CD8-positive, alpha-beta T cell (primary cell): ENCODE measurements at regions of chr2 and their contacts with region 1.

Region 1: GRCh38 chr2:118046634-118047210 is 32.9 kb upstream of the CCDC93 start:
- DNase-seq: peak in 2 of 9 experiments; percentile 36 to 53
- ATAC-seq: no peak
- H3K4me3 ChIP-seq: no peak overlapping the region
- H3K4me3 Mint-ChIP-seq: no peak overlapping the region
- H3K27ac ChIP-seq: no peak overlapping the region
- H3K27ac Mint-ChIP-seq: no peak overlapping the region
- H3K4me1 ChIP-seq: no peaks in the 10 kb centered on the region
- H3K4me1 Mint-ChIP-seq: no peaks in the 10 kb centered on the region
- H3K27me3 ChIP-seq: peaks cover 0 to 3% of the 10 kb centered on the region in 2 experiments
- H3K27me3 Mint-ChIP-seq: peaks cover 44% of the 10 kb centered on the region
- CTCF ChIP-seq: peak; percentile 73

Region 2: DNA sequence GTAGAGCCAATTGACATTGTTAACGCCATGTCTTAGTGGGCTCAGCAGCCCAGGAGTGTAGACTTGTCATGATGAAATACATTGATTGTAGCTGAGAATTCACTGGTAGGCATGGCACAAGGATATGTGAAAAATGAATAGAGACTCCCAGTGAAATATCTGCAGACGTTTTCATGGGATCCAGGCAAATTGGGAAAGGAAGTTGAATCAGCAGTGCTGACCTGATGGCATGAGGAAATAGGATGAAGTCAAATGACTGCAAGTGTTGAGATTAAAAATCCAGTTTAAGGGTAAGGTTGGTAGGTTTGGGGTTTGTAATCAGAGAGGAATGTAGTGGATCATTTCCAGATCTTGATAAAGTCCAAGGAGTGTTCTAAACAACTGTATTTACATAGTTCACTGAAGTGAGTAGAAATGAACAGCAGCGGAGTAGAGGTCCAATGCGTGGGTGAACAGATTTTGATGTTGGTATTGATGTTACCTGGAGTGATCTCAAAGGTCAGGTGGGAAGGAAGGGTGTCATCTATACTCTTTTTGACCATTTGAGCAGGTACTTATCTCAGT is 66.1 kb after region 1 on chr2:
- CTCF ChIA-PET with region 1: no interaction called
- POLR2A ChIA-PET with region 1: no interaction called
- intact Hi-C with region 1: no loop called
- DNase-seq: no peak
- ATAC-seq: no peak
- H3K4me3 ChIP-seq: no peak overlapping the region
- H3K4me3 Mint-ChIP-seq: no peak overlapping the region
- H3K27ac ChIP-seq: no peak overlapping the region
- H3K27ac Mint-ChIP-seq: no peak overlapping the region
- H3K4me1 ChIP-seq: no peaks in the 10 kb centered on the region
- H3K4me1 Mint-ChIP-seq: no peaks in the 10 kb centered on the region
- H3K27me3 ChIP-seq: no peaks in the 10 kb centered on the region
- H3K27me3 Mint-ChIP-seq: no peaks in the 10 kb centered on the region
- CTCF ChIP-seq: no peak

Region 3: DNA sequence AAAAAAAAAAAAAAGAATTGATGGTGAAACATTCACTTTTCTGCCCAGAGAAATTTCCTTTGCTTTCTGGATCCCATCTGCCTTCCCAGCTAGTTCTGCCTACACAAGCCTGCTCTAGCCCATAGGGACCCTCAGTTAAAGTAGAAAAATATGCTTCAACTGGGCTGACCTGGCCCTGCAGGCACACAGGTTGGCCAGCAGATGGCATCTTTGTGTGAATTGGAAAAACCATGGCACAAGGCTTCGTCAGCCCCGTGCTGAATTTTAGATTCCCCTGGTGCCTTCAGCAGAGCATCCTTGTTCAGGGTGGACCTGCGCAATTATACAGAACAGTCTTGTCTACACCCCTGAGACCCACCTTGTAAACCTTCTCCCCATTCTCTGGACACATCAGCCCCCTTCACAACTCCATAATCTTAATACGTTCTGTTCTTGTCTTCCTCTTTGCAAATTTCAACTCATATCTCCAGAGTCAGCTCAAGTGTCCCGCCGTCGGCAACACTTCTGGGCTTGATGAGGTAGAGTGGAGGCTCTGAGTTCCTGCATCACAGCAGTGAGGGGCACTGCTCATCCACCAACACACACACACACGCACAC is 156.1 kb after region 1 on chr2:
- CTCF ChIA-PET with region 1: interaction called, 4 read pairs
- POLR2A ChIA-PET with region 1: no interaction called
- intact Hi-C with region 1: loop called in 1 of 2 experiments (anchors 1 kb)
- DNase-seq: peak in 8 of 9 experiments; percentile 24 to 71 (median 54)
- ATAC-seq: peak; percentile 92
- H3K4me3 ChIP-seq: no peak overlapping the region
- H3K4me3 Mint-ChIP-seq: peak overlapping the region; percentile 0
- H3K27ac ChIP-seq: no peak overlapping the region
- H3K27ac Mint-ChIP-seq: no peak overlapping the region
- H3K4me1 ChIP-seq: no peaks in the 10 kb centered on the region
- H3K4me1 Mint-ChIP-seq: peaks cover 5% of the 10 kb centered on the region
- H3K27me3 ChIP-seq: no peaks in the 10 kb centered on the region
- H3K27me3 Mint-ChIP-seq: peaks cover 26% of the 10 kb centered on the region
- CTCF ChIP-seq: peak; percentile 77

Region 4: GRCh38 chr2:118855451-118856279 is 808.9 kb after region 1 on chr2:
- CTCF ChIA-PET with region 1: interaction called, 20 read pairs
- POLR2A ChIA-PET with region 1: no interaction called
- intact Hi-C with region 1: loop called (anchors 1 kb)
- DNase-seq: peak; percentile 69 to 87 (median 79)
- ATAC-seq: peak; percentile 88
- H3K4me3 ChIP-seq: peak overlapping the region; percentile 23 to 53
- H3K4me3 Mint-ChIP-seq: peak overlapping the region; percentile 73
- H3K27ac ChIP-seq: no peak overlapping the region
- H3K27ac Mint-ChIP-seq: no peak overlapping the region
- H3K4me1 ChIP-seq: peaks cover 27% of the 10 kb centered on the region
- H3K4me1 Mint-ChIP-seq: peaks cover 18% of the 10 kb centered on the region
- H3K27me3 ChIP-seq: peaks cover 47 to 57% of the 10 kb centered on the region in 2 experiments
- H3K27me3 Mint-ChIP-seq: peaks cover 65% of the 10 kb centered on the region
- CTCF ChIP-seq: peak; percentile 85

Region 5: DNA sequence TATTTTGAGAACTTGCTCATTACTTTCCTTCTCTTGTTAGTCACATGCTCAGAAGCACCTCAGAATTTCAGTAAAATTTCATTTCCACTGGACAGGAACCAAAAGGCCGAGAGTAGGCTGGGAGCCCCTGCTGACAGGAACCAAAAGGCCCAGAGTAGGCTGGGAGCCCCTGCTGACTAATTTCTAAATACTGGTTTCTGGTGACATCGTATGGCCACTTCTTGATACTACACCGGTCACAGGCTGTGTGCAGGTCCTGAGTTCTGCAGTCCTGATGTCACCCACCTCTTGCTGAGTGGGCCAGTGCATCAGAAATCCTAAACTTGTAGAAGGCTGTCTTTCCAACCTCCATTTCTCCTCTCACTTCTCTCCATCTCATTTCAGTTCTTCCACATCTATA is 818.4 kb after region 1 on chr2:
- CTCF ChIA-PET with region 1: interaction called, 18 read pairs
- POLR2A ChIA-PET with region 1: no interaction called
- intact Hi-C with region 1: loop called (anchors 2 kb)
- DNase-seq: peak in 2 of 9 experiments; percentile 45 to 55
- ATAC-seq: peak; percentile 55
- H3K4me3 ChIP-seq: no peak overlapping the region
- H3K4me3 Mint-ChIP-seq: no peak overlapping the region
- H3K27ac ChIP-seq: no peak overlapping the region
- H3K27ac Mint-ChIP-seq: no peak overlapping the region
- H3K4me1 ChIP-seq: no peaks in the 10 kb centered on the region
- H3K4me1 Mint-ChIP-seq: no peaks in the 10 kb centered on the region
- H3K27me3 ChIP-seq: peaks cover 0 to under 1% of the 10 kb centered on the region in 2 experiments
- H3K27me3 Mint-ChIP-seq: peaks cover 34% of the 10 kb centered on the region
- CTCF ChIP-seq: peak; percentile 31

Region 6: DNA sequence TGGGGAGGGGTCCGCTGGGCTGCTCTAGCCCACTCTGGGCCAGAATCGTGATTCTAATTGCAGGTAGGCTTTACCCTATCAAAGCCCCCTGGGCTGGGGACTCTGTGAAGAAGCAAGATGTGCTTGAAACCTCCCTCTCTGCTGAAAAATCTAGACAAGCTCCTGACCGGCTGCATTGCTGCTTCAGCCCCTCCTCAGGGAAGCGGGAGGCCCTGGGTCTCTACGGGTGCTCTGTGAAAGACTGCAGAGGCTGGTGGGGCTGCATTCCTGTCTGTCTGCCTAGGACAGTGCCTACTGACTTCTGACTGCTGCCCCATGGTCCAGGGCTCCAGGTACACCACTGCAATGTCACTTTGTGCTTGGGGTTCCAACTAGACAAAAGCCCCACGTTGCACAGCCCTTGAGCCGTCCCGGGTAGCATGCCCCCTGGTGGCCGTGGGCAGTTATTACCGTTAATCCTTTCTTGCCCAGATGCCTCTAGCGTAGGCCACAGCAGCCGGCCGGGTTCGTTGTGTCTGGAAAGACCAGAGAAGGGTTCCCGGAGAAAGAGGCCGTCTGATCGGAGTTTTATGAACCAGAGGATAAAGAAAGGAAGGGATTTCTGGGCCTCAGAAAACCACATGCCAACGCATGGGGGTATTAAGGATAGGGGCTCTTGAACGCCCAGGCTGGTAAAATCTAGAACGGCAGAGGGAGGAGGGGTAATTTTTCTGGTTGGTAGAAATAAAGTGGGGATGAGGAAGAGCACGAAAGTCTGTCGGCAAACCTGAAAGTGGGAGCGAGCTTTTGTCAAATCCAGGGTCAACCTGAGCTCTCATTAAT is 1127.7 kb after region 1 on chr2:
- CTCF ChIA-PET with region 1: no interaction called
- POLR2A ChIA-PET with region 1: no interaction called
- intact Hi-C with region 1: loop called in 1 of 2 experiments (anchors 5 kb)
- DNase-seq: peak; percentile 25 to 76 (median 50)
- ATAC-seq: no peak
- H3K4me3 ChIP-seq: no peak overlapping the region
- H3K4me3 Mint-ChIP-seq: no peak overlapping the region
- H3K27ac ChIP-seq: no peak overlapping the region
- H3K27ac Mint-ChIP-seq: no peak overlapping the region
- H3K4me1 ChIP-seq: no peaks in the 10 kb centered on the region
- H3K4me1 Mint-ChIP-seq: no peaks in the 10 kb centered on the region
- H3K27me3 ChIP-seq: no peaks in the 10 kb centered on the region
- H3K27me3 Mint-ChIP-seq: no peaks in the 10 kb centered on the region
- CTCF ChIP-seq: peak; percentile 73

Region 7: DNA sequence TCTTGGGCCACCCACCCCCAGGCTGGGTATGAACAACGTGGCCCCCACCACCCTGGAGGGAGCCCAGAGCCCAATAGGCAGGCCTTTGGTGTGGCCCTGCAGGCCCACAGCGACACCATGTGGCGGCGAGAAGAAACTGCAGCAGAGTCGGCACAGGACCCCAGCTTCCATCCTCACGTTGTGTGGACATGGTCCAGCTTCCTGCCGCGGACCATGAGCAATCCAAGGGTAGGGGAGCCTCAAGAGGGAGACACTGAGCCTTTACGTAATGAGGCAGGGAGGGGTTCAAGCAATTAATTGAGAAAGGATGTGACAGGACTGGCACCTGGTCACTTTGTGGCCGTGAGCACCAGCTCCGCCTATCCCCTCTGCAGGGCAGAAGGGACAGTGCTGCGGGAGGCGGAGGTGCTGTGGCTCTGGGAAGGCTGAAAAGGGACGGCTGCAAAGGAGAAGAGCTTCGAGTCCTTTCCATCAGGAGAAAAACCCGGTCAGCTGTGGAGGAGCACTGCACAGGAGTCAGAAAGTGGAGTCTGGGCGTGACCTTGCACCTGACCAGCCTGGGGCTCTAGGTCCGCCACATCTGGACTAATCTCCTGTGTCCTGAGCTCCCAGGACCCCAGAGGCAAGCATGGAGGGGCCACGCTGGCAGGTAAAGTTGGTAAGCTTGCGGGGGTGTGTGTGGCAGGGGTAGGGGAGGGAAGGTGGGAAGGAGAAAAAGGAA is 1429.7 kb after region 1 on chr2:
- CTCF ChIA-PET with region 1: no interaction called
- POLR2A ChIA-PET with region 1: no interaction called
- intact Hi-C with region 1: loop called in 1 of 2 experiments (anchors 5 kb)
- DNase-seq: peak in 7 of 9 experiments; percentile 8 to 60 (median 22)
- ATAC-seq: no peak
- H3K4me3 ChIP-seq: no peak overlapping the region
- H3K4me3 Mint-ChIP-seq: no peak overlapping the region
- H3K27ac ChIP-seq: no peak overlapping the region
- H3K27ac Mint-ChIP-seq: no peak overlapping the region
- H3K4me1 ChIP-seq: no peaks in the 10 kb centered on the region
- H3K4me1 Mint-ChIP-seq: no peaks in the 10 kb centered on the region
- H3K27me3 ChIP-seq: peaks cover 0 to 5% of the 10 kb centered on the region in 2 experiments
- H3K27me3 Mint-ChIP-seq: peaks cover 13% of the 10 kb centered on the region
- CTCF ChIP-seq: peak; percentile 74

Region 8: DNA sequence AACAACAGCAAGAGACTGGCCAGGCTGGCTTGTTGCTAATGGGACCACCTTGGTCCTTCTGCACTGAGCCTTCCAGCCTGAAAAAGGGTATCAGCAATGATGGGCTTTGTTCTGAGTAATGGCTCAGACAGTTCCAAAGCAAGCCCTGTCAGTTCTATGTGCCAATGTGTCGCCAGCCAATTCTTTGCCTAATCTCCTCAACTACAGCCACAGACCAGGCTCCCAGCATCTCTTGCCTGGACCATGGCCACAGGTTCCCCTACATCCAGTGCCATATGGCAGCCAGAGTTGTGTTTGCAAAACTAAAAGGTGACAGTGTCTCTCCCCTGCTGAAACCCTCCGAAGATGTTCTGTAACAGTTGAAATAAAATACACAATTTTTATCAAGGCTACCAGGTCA is 1570.7 kb after region 1 on chr2:
- CTCF ChIA-PET with region 1: no interaction called
- POLR2A ChIA-PET with region 1: no interaction called
- intact Hi-C with region 1: no loop called
- DNase-seq: no peak
- ATAC-seq: no peak
- H3K4me3 ChIP-seq: no peak overlapping the region
- H3K4me3 Mint-ChIP-seq: no peak overlapping the region
- H3K27ac ChIP-seq: no peak overlapping the region
- H3K27ac Mint-ChIP-seq: no peak overlapping the region
- H3K4me1 ChIP-seq: no peaks in the 10 kb centered on the region
- H3K4me1 Mint-ChIP-seq: no peaks in the 10 kb centered on the region
- H3K27me3 ChIP-seq: peaks cover 0 to 8% of the 10 kb centered on the region in 2 experiments
- H3K27me3 Mint-ChIP-seq: peaks cover 32% of the 10 kb centered on the region
- CTCF ChIP-seq: no peak